Sciatic nerve (tissue), 2 donors: ENCODE measurements at regions of chr3 and their contacts with region 1.

Region 1: GRCh38 chr3:138118612-138119422 is 3.4 kb upstream of the DZIP1L start:
- DNase-seq: peak; percentile 86
- ATAC-seq: peak; percentile 58

Region 2: DNA sequence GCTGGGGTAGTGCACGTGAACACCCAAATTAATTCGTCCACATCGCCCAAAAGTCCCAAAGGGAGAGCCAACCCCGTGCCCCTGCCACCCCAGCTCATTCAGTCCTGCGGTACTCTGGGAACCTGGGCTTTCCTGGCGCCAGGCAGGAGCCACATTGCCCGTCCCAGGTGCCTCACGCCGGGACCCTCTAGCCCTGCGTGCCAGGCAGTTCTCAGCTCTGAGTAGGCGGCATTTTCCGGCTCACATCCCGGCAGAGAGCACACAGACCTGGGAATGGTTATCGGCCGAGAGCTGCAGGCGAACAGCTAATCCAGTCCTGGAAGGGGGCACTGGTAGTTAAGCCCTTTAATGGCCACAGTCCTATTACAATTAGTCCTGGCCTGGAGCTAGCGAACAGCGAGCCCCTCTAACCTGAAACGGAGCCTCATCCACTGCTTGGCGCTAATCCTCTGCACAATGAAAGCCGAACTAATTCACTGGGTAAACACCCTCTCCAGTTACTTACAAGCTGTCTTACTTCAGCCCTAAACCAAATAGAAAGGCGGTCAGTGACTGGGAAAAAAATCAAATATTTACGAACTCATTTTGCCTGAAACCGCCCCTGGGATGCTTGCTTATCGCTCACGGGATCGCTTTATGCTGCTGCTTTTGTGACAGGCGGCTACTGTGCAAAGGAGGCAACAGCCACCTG is 609.3 kb before region 1 on chr3:
- intact Hi-C with region 1: no loop called
- DNase-seq: no peak
- ATAC-seq: no peak

Region 3: DNA sequence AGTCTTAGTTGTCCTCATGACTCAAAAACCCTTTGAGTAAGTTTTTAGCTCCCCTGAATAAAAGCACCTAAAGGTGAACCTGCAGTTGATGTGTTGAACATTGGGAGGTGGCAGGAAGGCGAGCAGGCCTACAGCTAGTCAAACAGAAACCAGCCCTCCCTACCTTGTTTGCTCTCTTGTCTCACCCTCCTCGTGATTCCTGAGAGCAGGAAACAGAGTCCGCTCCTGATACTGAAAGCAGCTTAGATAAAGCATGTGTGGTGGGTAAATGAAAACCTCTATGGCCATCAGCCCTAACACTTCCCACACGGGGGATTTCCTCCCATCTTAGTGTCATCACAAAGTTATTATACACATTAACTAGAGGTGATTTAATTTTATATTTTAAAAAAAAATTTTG is 130.7 kb before region 1 on chr3:
- intact Hi-C with region 1: no loop called
- DNase-seq: no peak
- ATAC-seq: no peak

Region 4: GRCh38 chr3:138068579-138069174 is 50.1 kb before region 1 on chr3:
- intact Hi-C with region 1: loop called (anchors 5 kb)
- DNase-seq: peak; percentile 89
- ATAC-seq: peak; percentile 93

Region 5: DNA sequence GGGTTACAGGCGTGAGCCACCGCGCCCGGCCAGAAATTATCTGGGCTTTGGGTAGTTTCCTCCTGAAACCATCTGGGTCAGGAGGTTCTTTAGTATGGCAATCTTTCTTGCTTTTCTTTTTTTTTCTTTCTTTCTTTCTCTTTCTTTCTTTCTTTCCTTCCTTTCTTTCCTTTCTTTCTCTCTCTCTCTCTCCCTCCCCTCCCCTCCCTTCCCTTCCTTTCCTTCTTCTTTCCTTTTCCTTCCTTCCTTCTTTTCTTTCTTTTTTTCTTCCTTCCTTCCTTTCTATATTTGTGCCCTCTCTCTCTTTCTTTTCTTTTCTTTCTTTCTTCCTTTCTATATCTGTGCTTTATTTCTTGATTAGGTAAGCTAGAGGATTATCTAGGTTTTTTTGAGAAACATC is 38.9 kb after region 1 on chr3:
- intact Hi-C with region 1: no loop called
- DNase-seq: no peak
- ATAC-seq: no peak

Region 6: DNA sequence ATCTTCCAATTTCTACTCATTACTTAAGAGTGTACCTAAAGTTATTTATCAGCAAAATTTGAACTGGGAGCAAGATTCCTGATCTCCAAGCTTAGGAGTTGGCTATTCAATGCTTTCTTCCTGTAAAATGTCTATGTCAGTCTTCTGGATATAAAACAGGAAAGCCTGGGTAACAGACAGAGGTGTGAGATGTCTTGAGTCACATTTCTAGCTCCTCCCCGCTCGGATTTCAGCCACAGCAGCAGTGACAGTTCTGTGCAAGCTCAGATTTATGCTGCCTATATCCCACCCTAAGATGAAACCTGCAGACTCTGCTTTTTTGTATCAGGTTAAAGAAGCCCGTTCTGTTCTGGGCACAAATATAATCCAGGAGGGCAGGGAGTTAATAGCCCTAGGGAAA is 66.2 kb after region 1 on chr3:
- intact Hi-C with region 1: loop called (anchors 2 kb)
- DNase-seq: no peak
- ATAC-seq: no peak